Activated CD4-positive, alpha-beta memory T cell treated with anti-CD3 and anti-CD28 coated beads for 36 hours (primary cell): ENCODE measurements at regions of chr10 and their contacts with region 1.

Region 1: DNA sequence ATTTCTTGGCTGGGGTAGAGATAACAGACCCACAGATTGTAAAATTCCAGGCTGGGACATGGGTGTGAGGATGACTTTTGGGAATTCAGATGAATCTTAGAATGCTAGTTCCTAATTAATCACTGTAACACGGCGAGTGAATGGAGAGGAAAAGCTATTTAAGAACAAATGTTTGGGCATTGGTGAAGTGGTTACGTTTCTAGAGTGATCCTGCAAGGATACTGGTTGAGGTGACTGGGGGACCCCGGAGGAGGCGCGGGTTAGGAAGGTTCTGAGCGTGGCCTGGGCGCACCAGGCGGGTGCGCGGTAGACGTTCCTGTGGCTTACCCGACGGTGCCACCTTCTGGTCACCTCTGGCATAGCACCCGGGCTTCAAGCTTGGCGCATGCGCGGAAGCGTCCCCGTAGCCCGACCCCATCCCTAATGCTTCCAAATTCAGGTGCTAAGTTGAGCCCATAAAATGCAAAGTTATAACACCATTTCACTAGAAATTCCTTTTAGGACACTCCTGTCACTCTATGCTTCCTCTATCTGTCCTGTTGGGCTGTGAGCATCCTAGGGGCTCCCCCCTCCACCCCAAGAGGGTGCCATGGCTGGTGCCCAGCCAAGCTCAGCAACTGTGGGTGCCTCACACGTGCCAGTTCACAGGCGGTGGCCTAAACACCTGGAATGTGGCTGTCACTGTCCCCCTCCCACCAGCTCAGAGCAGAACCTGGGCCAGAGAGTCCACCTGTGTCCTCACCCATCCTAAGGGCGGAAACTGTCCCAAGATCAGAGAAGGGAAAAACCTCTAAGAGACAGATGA is 104.5 kb downstream of the PTPRE start:
- DNase-seq: peak; percentile 91
- H3K4me3 Mint-ChIP-seq: no peak overlapping the region
- H3K27ac Mint-ChIP-seq: peak overlapping the region; percentile 18
- H3K4me1 Mint-ChIP-seq: peaks cover 12% of the 10 kb centered on the region
- H3K27me3 Mint-ChIP-seq: peaks cover 14% of the 10 kb centered on the region

Region 2: DNA sequence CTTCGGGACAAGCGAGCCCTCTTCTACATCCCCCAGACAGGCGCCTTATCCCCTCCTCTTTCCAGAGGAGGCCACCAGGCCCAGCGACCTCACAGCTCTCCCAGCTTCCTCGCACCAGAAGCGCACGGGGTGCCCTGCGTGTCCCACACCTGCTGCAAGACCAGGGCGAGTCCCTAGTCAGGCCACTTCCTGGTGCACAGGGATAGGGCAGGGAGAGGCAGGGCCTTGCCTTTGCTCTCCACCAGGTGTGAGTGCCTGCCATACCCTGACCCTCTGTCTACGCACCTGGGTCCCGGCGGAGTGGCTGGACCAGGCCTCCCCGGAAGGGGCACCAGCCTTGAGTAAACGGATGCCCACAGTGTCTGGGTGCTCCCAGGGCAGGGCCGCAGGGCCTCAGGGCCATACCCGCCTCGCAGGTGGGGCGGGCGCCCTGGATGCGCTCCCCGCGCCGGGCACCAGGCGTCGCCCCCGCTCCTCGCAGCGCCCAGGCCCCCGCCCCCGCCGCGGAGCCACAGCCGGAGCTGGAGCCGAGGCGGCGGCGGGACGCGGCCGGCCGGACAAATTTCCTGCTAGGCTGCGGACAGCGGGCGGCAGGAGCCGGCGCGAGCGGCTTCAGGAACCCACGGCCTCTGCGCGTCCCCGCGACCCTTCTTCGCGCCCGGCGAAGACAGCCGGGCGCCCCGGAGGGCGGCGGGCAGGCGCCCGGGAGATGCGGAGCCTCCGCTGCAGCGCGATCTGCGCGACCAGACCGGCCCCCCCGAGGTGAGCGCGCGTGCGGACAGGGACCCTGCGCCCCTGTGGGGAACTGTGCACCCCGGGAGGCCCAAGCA is 104.6 kb before region 1 on chr10 and contains the start of gene PTPRE:
- CTCF ChIA-PET with region 1: interaction called, 270 read pairs
- POLR2A ChIA-PET with region 1: interaction called, 3 read pairs
- intact Hi-C with region 1: loop called (anchors 1 kb)
- DNase-seq: peak; percentile 78
- H3K4me3 Mint-ChIP-seq: peak within 1 kb of the TSS; percentile 25
- H3K27ac Mint-ChIP-seq: no peak within 1 kb of the TSS
- H3K4me1 Mint-ChIP-seq: no peaks in the 10 kb centered on the region
- H3K27me3 Mint-ChIP-seq: peaks cover 27% of the 10 kb centered on the region
- total RNA-seq, gene PTPRE: 29.4 to 34.0 TPM

Region 3: DNA sequence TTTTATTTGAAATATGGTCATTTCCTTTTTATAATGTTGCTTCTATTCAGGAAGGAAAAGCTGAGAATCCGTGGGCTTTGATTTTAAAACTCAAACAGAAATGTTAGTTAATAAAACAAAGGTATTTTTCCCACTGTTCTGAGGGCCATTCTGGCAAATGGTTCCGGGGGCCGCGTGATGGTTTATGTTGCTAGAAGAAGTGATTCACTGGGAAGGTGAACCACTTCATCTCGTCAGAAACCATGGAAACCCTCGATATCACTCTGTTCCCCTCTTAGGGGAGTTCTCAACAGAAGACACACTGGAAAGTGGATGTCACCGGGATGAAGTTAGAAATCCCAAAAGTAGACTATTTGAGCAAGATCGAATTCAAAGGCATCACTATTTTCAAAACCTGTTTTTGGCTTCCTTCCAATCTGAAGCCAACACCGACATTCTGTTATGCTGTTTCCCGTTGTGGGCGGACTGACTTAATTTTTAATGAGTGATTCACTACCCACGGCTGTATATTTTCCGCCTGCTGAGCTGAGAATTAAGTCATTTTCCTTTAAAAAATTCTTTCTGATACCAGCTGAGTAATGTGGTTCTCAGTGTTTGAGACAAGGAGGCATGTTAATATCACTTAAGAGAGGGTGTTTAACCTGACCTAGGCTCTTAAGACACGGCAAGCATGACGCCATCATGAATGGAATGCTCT is 20.4 kb before region 1 on chr10:
- CTCF ChIA-PET with region 1: interaction called, 25 read pairs
- POLR2A ChIA-PET with region 1: interaction called, 3 read pairs
- intact Hi-C with region 1: loop called (anchors 1 kb)
- DNase-seq: peak; percentile 80
- H3K4me3 Mint-ChIP-seq: peak overlapping the region; percentile 54
- H3K27ac Mint-ChIP-seq: peak overlapping the region; percentile 92
- H3K4me1 Mint-ChIP-seq: peaks cover 56% of the 10 kb centered on the region
- H3K27me3 Mint-ChIP-seq: peaks cover 2% of the 10 kb centered on the region

Region 4: DNA sequence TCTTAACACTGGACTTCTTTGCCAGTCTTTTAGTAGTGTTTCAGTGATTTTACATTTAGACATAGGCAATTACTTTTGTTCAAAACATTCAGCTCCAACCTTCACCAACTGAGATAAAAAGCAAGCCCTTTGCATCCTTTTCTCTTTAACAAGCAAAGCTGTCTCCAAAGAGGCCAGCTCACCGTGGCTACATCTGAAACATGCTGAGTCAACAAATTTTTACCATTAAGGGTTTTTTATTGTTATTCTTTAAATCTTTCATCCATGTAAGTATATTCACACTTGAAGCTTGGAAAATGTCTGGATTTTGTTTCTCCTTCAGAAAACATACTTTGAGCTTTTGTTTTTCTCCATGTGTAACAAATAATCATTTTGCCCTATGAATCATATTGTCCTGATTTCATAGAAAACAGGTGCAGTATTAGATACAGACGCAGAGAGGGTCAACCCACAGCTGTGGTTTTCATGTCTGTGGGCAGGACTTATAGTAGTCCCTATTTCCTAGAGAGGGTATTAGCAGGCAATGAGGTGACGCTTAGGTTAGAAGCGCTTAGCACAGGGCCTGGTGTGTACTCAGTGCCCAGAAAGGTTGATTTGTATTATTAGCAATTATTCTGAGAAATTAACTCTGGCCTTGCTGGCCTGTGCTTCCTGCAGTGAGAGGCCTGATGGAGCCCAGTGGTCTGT is 15.4 kb after region 1 on chr10:
- CTCF ChIA-PET with region 1: interaction called, 10 read pairs
- POLR2A ChIA-PET with region 1: no interaction called
- intact Hi-C with region 1: no loop called
- DNase-seq: peak; percentile 70
- H3K4me3 Mint-ChIP-seq: no peak overlapping the region
- H3K27ac Mint-ChIP-seq: peak overlapping the region; percentile 87
- H3K4me1 Mint-ChIP-seq: peaks cover 30% of the 10 kb centered on the region
- H3K27me3 Mint-ChIP-seq: peaks cover 3% of the 10 kb centered on the region

Region 5: GRCh38 chr10:128047351-128047750 is 36.0 kb after region 1 on chr10:
- CTCF ChIA-PET with region 1: interaction called, 21 read pairs
- POLR2A ChIA-PET with region 1: no interaction called
- intact Hi-C with region 1: loop called (anchors 1 kb)
- DNase-seq: peak; percentile 93
- H3K4me3 Mint-ChIP-seq: peak overlapping the region; percentile 93
- H3K27ac Mint-ChIP-seq: peak overlapping the region; percentile 99
- H3K4me1 Mint-ChIP-seq: peaks cover 54% of the 10 kb centered on the region
- H3K27me3 Mint-ChIP-seq: no peaks in the 10 kb centered on the region

Region 6: GRCh38 chr10:128069351-128070051 is 58.1 kb after region 1 on chr10:
- CTCF ChIA-PET with region 1: interaction called, 66 read pairs
- POLR2A ChIA-PET with region 1: no interaction called
- intact Hi-C with region 1: loop called (anchors 1 kb)
- DNase-seq: peak; percentile 86
- H3K4me3 Mint-ChIP-seq: no peak overlapping the region
- H3K27ac Mint-ChIP-seq: no peak overlapping the region
- H3K4me1 Mint-ChIP-seq: peaks cover 35% of the 10 kb centered on the region
- H3K27me3 Mint-ChIP-seq: no peaks in the 10 kb centered on the region

Region 7: DNA sequence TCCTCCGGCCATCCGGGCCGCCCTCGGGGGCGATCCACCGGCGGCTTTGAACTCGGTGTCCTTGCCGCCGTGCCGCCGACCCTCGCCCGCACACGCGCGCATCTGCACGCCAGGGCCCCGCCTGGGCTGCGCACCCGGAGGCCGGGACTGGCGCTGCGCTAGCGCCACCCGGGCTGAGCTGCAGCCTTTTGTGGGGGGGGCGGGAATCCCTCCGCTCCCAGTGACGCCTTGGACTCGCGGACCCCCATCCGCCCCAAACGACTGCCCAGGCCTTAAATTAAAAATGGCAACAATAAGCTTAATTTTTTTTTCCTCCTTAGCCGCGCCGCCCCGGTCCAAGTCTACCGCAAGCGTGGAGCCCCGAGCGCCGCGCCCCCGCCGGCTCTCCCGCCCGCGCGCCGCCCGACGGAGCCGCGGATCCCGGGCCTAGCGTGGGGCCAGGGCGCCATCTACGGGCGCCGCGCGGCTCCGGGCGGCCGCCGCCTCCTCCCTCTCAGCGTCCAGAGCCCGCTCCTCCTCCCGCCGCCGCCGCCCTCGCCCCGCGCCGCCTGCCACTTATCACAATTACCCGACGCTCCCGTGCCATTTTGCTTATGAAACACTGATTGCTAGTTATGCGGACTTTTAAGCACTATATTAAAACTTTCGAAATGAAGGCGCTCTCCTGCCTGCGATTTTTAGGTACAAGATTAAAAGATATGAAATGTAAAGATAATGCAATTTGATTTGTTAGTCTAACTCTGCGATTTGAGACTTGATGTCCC is 1960.2 kb after region 1 on chr10:
- CTCF ChIA-PET with region 1: no interaction called
- POLR2A ChIA-PET with region 1: no interaction called
- intact Hi-C with region 1: loop called (anchors 5 kb)
- DNase-seq: peak; percentile 68
- H3K4me3 Mint-ChIP-seq: peak overlapping the region; percentile 4
- H3K27ac Mint-ChIP-seq: peak overlapping the region; percentile 43
- H3K4me1 Mint-ChIP-seq: peaks cover 16% of the 10 kb centered on the region
- H3K27me3 Mint-ChIP-seq: peaks cover 69% of the 10 kb centered on the region